ENCODE measurements at regions of chr14 and their contacts with region 1.

Region 1: DNA sequence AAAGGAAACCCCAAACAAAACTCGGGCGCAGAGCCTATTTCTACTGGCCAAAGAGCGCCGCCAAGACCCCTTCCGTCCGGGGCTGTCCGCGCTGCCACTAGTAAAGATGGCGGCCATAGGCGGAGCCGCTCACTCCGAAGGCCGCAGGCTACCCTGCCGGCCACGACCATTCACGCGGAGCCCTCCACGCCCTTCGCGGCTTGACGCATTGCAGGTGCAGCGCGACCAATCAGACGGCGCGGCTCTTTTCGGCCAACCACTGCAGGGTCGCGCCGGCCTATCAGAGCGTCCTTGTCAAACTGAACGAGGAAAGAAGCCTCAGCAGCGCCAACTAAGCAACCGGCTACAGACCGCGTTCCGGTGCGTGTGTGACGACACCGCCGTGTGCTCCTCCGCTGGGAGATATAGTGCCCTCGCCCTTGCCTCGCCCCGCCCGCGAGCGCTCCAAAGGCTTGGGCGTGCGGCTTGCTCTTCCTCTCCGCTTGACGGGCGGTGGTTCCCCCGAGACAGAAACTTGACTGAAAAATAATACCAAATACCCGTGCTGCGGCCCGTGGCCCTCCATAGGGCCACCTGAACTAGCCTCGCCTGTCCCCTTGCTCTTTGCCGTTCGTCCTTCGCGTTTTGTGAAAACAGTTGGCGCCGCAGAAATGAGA is 13.6 kb upstream of the CALM1 start:
- DNase-seq: peak; percentile 99
- H3K4me3 Mint-ChIP-seq: no peak overlapping the region
- H3K27ac Mint-ChIP-seq: no peak overlapping the region
- H3K4me1 Mint-ChIP-seq: peaks cover 21% of the 10 kb centered on the region
- H3K27me3 Mint-ChIP-seq: peaks cover 5% of the 10 kb centered on the region

Region 2: DNA sequence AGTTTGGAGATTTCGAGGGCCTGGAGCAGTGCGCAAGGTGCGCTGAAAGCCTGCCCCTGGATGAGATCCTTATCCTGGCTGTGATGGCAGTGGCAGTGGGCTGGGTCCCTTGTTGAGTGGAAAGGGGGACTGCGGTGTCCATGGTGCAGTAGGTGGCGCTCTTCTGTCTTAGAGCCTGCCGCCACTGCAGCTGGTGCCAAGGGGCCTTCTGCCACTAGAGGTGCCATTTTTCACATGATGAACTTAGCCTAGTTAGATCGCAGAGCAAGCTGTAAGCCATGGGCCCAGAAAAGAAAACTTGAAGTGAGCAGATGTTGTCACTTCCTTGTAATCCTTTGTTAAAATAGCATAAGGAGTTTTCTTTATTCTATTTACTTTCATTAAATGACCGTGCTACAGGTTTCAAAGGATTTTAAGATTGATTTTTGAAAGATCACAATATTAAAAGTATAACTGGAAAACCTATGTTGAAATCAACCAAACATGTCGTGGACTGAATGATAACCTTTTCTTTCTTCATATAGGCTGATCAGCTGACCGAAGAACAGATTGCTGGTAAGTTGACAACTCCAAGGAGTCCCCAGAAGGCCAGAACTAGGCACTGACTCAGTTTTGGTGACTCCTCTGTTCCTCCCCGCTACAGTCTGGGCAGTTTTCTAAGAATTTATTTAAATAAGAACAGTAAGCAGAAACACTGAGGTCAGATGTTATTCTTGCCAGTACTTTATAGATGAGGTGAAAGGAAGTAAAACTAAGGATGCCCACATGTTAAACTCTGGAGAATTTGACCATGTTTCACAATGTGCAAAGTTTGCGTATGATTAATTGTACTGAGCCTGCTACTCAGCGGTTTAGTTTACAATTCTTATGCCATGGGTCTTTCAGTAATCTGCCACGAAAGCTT is 16.6 kb after region 1 on chr14:
- CTCF ChIA-PET with region 1: interaction called, 10 read pairs
- DNase-seq: peak; percentile 92
- H3K4me3 Mint-ChIP-seq: peak overlapping the region; percentile 97
- H3K27ac Mint-ChIP-seq: peak overlapping the region; percentile 100
- H3K4me1 Mint-ChIP-seq: peaks cover 57% of the 10 kb centered on the region
- H3K27me3 Mint-ChIP-seq: peaks cover 10% of the 10 kb centered on the region

Region 3: DNA sequence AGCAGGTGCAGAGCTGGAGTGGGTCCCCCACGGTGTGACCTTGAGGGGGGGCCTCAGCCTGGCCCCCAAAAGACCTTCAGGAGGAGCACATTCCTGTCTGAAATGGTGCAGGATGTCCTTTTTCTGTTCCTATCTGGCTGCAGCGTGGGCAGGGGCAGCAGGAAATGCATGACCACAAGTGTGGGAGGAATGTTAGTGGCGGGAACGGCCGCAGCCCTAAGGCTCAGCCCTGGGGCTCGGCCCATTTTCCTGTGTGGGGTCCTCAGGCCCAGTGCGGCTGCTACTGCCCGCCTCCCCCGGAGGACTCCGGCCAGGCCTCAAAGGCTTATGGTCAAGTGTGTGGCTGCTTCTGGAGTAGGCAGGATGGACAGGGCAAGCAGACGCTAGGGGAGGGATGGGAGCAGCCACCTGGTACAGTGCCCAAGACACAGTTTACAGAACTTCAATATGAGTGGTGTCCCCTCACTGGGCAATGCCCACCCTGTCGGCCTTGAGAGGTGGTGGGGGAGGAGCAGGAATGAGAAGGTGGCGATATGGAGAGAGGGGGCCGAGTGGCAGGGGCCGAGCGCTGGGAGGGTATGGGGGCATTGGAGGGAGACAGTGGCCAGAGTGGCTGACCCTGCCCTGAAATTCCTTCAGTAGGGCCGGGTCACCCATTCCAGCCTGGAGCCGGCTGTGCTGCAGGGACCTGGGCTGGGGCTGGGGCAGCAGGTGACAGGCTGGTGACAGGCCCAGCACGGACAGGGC is 151.1 kb after region 1 on chr14:
- CTCF ChIA-PET with region 1: no interaction called
- DNase-seq: no peak
- H3K4me3 Mint-ChIP-seq: no peak overlapping the region
- H3K27ac Mint-ChIP-seq: no peak overlapping the region
- H3K4me1 Mint-ChIP-seq: no peaks in the 10 kb centered on the region
- H3K27me3 Mint-ChIP-seq: peaks cover 3% of the 10 kb centered on the region